ENCODE measurements at regions of chr1 and their contacts with region 1.

Region 1: DNA sequence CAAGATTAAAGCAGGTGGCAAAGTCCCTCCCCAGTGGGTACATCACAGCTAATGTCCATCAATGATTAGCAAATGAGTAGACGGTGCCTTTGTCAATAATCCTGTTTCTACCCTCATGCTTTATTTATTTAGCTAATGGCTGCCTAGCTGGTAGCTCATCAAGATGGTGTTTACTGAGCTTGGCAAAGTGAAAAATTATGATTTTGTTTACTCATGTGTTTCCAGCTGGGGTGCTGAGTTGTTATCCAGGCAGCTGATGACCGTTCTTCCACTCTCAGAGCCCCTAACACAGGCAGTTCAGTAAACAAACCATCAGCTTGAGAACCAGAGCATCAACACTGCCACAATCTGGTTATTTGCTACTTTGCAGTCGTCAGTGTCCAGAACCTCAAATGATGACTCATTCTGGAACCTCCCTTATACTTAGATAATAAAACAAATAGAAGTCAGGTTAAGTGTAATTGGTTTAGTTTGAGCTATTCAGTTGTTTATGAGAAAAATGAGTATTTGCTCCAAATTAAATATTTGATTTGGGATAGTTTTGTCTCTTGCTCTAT is 163.9 kb downstream of the ST6GALNAC5 start:
- DNase-seq: peak; percentile 63
- H3K4me3 Mint-ChIP-seq: no peak overlapping the region
- H3K27ac Mint-ChIP-seq: no peak overlapping the region
- H3K4me1 Mint-ChIP-seq: peaks cover 5% of the 10 kb centered on the region
- H3K27me3 Mint-ChIP-seq: no peaks in the 10 kb centered on the region
- CTCF ChIP-seq: peak; percentile 22

Region 2: DNA sequence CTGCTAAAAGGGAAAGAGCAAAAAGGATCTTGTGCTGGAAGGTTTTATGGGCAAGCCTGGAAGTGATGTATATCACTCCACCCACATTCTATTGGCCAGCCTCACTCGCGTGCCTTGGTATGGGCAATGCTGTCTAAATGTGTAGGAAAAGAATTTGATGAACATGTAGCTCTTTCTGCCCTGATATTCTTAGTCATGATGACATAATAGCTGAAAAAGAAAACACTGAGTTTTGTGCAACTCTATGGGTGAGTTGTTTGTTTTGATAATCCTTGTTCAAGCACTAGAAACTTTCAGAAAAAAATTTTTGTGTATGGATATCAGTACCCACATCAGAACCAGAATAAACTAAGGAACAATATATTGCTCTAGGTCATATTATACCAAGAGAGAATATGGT is 395.4 kb before region 1 on chr1:
- CTCF ChIA-PET with region 1: no interaction called
- POLR2A ChIA-PET with region 1: no interaction called
- intact Hi-C with region 1: loop called (anchors 10 kb)
- DNase-seq: peak; percentile 70
- H3K4me3 Mint-ChIP-seq: no peak overlapping the region
- H3K27ac Mint-ChIP-seq: no peak overlapping the region
- H3K4me1 Mint-ChIP-seq: peaks cover 36% of the 10 kb centered on the region
- H3K27me3 Mint-ChIP-seq: no peaks in the 10 kb centered on the region
- CTCF ChIP-seq: no peak

Region 3: GRCh38 chr1:76901158-76901767 is 129.9 kb before region 1 on chr1:
- CTCF ChIA-PET with region 1: no interaction called
- POLR2A ChIA-PET with region 1: no interaction called
- intact Hi-C with region 1: loop called (anchors 2 kb)
- DNase-seq: peak; percentile 69
- H3K4me3 Mint-ChIP-seq: no peak overlapping the region
- H3K27ac Mint-ChIP-seq: no peak overlapping the region
- H3K4me1 Mint-ChIP-seq: no peaks in the 10 kb centered on the region
- H3K27me3 Mint-ChIP-seq: no peaks in the 10 kb centered on the region
- CTCF ChIP-seq: peak; percentile 53

Region 4: DNA sequence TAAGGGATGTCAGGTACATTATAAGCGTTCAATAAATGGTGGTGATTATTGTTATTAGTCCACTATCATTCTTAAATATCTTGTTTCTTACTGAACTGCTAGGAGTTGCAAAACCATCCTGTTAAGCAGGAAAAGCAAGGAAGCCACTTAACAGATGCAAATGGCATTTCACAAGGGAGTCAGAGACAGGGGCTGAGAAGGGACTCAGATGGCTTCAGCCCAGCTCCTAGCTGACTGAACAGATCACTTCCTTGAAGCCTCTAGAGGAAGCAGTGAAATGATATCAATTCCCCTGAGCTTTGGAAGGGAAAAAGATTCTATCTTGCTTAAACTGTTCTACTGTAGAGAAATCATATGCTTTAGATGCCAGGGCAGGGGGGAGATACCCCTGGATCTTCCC is 12.4 kb before region 1 on chr1:
- CTCF ChIA-PET with region 1: interaction called, 15 read pairs
- POLR2A ChIA-PET with region 1: interaction called, 3 read pairs
- intact Hi-C with region 1: no loop called
- DNase-seq: no peak
- H3K4me3 Mint-ChIP-seq: no peak overlapping the region
- H3K27ac Mint-ChIP-seq: no peak overlapping the region
- H3K4me1 Mint-ChIP-seq: no peaks in the 10 kb centered on the region
- H3K27me3 Mint-ChIP-seq: no peaks in the 10 kb centered on the region
- CTCF ChIP-seq: no peak

Measured in MCF 10A (cell line).